ENCODE measurements at regions of chr11 and their contacts with region 1.

Region 1: DNA sequence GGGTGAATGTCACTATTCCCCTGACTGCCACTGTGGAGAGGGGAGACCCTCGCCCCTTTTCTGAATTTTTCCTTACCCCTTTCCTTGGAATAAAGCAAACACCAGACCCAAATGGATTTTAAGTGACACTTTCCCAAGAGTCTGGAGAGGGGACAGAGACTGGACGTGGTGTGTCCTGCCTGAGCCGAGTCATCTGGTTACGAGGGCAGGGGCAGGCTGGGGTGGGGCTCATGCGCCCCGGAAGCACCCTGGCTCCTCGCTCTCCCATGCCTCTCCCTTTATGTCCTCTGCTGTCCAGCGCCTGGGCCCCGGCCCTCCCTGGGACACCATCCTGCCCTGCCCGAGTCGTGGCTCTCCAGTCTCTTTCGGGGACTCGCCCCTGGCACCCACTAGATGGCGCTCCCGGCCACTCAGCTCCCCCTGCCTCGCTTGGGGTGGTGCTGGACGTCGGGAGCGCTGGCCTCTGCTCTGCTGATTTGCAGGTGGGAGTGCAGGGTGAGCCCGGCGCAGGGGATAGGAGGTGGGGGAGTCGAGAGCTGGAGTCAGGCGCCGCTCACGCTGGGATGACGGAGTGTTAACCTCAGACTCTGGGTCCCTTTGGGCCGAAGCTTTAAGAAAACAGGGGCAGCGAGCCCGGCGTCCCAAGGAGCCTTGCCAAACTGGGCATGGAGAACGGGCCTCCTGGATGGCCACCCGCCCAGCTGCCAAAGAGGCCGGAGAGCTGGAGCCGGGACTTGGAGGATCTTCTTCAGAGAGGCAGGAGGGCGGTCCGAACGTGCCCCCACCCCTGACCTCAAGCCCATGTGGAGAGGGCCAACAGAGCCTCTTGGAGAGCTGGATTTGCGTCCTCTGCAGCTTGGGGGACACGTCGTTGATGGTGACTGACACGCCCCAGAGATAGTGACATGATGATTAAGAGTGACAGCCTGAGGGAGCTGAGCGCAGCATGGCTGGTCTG is 89.9 kb downstream of the RPS6KA4 start:
- DNase-seq: peak; percentile 94
- H3K4me3 ChIP-seq: peak overlapping the region; percentile 31 to 43
- H3K27ac ChIP-seq: no peak overlapping the region; a peak in 1 of 4 replicates
- H3K4me1 ChIP-seq: peaks cover 0 to 16% of the 10 kb centered on the region in 2 experiments; a peak in 1 of 4 replicates
- H3K27me3 ChIP-seq: peaks cover 12% of the 10 kb centered on the region; the same call in 1 of the 2 replicates
- CTCF ChIP-seq: peak; percentile 81
- EP300 ChIP-seq: no peak
- RAD21 ChIP-seq: peak; percentile 70

Region 2: DNA sequence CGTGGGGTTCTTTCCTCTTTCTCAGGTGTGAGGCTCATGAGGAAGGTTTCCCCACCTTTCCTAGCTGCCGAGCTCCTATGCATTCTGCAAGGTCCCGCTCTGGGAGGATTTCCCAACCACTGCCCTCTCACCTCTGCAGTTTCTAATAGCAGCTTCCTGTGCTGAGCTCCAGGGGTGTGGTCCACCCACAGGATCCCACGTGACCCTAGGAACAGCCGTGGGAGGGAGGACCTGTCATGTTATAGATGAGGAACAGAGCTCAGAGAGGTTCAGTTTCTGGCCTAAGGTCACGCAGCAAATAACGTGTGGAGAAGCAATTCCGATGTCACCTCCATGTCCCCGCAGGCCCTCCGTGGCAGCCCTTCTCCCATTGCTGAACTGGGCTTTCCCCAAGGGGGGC is 374.6 kb before region 1 on chr11:
- CTCF ChIA-PET with region 1: no interaction called
- POLR2A ChIA-PET with region 1: no interaction called
- DNase-seq: no peak
- H3K4me3 ChIP-seq: no peak overlapping the region
- H3K27ac ChIP-seq: peak overlapping the region in 1 of 2 experiments; percentile 81; a peak in 1 of 4 replicates
- H3K4me1 ChIP-seq: peaks cover 11 to 90% of the 10 kb centered on the region in 2 experiments; a peak in 2 of 4 replicates
- H3K27me3 ChIP-seq: no peaks in the 10 kb centered on the region
- CTCF ChIP-seq: no peak
- EP300 ChIP-seq: no peak
- RAD21 ChIP-seq: no peak

Region 3: GRCh38 chr11:64386306-64386702 is 62.6 kb before region 1 on chr11:
- CTCF ChIA-PET with region 1: interaction called, 11 read pairs
- POLR2A ChIA-PET with region 1: no interaction called
- DNase-seq: no peak
- H3K4me3 ChIP-seq: no peak overlapping the region
- H3K27ac ChIP-seq: no peak overlapping the region
- H3K4me1 ChIP-seq: no peaks in the 10 kb centered on the region; a peak in 1 of 4 replicates
- H3K27me3 ChIP-seq: no peaks in the 10 kb centered on the region; the same call in 1 of the 2 replicates
- CTCF ChIP-seq: no peak
- EP300 ChIP-seq: no peak
- RAD21 ChIP-seq: no peak

Region 4: GRCh38 chr11:64428693-64429092 is 20.2 kb before region 1 on chr11:
- CTCF ChIA-PET with region 1: interaction called, 71 read pairs
- POLR2A ChIA-PET with region 1: no interaction called
- DNase-seq: no peak
- H3K4me3 ChIP-seq: no peak overlapping the region
- H3K27ac ChIP-seq: no peak overlapping the region
- H3K4me1 ChIP-seq: no peaks in the 10 kb centered on the region
- H3K27me3 ChIP-seq: no peaks in the 10 kb centered on the region; the same call in 1 of the 2 replicates
- CTCF ChIP-seq: no peak
- EP300 ChIP-seq: no peak
- RAD21 ChIP-seq: no peak

Region 5: DNA sequence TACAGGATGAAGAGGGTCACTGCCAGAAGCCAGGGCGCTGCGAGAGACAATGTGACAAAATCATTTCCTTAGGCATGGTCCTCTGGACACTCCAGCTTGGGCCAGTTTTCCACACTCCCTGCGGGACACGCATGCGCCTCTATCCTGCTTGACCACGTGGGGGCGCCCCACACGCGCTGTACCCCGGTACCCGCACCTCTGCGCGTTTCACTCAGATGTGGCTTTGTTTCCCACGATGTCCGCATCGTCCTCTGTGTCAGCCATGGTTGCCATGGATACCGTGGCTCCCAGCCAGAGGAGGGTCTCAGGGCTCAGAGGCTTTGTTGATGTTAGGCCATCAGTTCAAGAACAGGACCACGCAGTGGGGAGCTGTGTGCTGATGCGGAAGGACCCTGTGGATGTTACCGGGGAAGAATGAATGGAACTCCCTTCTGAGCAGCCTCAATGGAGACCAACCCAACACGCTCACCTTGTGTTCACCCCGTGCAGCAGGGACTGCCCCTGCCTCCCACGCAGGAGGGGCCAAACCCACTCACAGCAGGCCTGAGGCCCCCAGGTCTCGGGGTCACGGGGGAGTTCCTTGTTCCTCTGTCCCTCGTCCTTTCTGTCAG is 41.1 kb after region 1 on chr11:
- CTCF ChIA-PET with region 1: interaction called, 19 read pairs
- POLR2A ChIA-PET with region 1: no interaction called
- DNase-seq: peak; percentile 84
- H3K4me3 ChIP-seq: no peak overlapping the region; a peak in 1 of 4 replicates
- H3K27ac ChIP-seq: no peak overlapping the region
- H3K4me1 ChIP-seq: peaks cover 0 to 2% of the 10 kb centered on the region in 2 experiments; a peak in 1 of 4 replicates
- H3K27me3 ChIP-seq: peaks cover 10% of the 10 kb centered on the region; the same call in 1 of the 2 replicates
- CTCF ChIP-seq: peak; percentile 66
- EP300 ChIP-seq: no peak
- RAD21 ChIP-seq: peak; percentile 77

Region 6: DNA sequence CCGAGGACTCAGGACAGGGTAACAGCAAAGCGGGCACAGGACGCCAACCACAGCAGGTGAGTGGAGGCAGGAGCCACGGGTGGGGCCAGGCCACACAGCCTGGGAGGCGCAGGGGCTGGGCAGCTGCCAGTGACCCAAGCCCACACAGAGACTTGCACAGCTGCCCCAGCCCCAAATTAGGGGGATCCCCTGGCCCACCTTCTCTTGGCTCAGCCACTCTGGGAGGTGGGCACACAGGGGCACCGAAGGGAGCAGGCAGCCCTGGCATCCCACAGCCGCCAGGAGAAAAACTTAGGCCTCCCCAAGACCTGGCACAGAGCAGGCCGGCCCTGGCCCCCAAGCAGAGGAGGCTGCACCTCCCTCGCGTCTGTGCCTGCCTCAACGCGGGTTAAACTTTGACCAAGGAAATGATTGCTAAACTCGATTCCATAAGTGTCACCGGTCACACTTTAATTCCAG is 141.9 kb after region 1 on chr11 and contains the start of gene SLC22A12:
- CTCF ChIA-PET with region 1: interaction called, 11 read pairs
- POLR2A ChIA-PET with region 1: no interaction called
- DNase-seq: no peak
- H3K4me3 ChIP-seq: no peak within 1 kb of the TSS
- H3K27ac ChIP-seq: no peak within 1 kb of the TSS
- H3K4me1 ChIP-seq: no peaks in the 10 kb centered on the region
- H3K27me3 ChIP-seq: no peaks in the 10 kb centered on the region
- CTCF ChIP-seq: no peak
- EP300 ChIP-seq: no peak
- RAD21 ChIP-seq: no peak
- polyA plus RNA-seq, gene SLC22A12: not detected in 2 replicates

Region 7: DNA sequence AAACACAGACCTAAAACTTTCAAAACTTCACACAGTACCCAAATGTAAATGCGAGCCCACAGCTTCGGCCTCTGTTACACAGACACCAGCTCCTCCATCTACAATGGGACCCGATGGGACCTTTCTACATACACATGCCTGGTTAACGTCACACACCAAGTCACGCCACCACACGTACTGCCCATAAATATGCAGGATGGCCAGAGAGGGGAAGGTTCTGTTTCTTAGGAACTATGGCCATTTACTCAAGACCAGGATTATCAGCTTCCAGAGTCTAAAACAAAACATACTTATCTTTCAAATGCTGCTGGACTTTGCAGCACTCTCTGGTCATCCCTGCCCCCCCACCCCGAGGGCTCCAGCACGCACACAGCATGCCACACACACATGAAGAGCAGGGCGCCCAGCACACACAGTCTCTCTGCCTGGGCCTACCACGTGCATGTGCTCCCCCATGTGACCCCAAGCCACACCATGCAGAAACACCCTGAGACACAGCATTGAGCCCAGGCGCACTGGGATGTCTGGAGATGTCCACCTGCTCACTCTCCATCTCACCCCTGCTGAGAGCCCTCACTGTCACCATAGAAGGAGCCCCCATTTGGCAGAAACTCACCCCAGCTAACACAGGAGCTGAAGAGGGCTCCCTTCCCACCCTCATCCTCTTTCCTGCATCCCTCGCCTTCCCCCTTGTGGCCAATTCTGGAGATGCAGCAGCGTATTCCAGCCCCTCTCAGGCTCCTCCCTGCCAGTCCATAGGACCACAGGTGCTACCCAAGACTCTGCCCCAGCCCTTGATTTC is 203.9 kb after region 1 on chr11:
- CTCF ChIA-PET with region 1: interaction called, 121 read pairs
- POLR2A ChIA-PET with region 1: no interaction called
- DNase-seq: peak; percentile 93
- H3K4me3 ChIP-seq: no peak overlapping the region; a peak in 1 of 4 replicates
- H3K27ac ChIP-seq: no peak overlapping the region
- H3K4me1 ChIP-seq: peaks cover 0 to 7% of the 10 kb centered on the region in 2 experiments; a peak in 1 of 4 replicates
- H3K27me3 ChIP-seq: no peaks in the 10 kb centered on the region
- CTCF ChIP-seq: peak; percentile 83
- EP300 ChIP-seq: no peak
- RAD21 ChIP-seq: peak; percentile 93